ENCODE measurements at regions of chr4 and their contacts with region 1.

Region 1: DNA sequence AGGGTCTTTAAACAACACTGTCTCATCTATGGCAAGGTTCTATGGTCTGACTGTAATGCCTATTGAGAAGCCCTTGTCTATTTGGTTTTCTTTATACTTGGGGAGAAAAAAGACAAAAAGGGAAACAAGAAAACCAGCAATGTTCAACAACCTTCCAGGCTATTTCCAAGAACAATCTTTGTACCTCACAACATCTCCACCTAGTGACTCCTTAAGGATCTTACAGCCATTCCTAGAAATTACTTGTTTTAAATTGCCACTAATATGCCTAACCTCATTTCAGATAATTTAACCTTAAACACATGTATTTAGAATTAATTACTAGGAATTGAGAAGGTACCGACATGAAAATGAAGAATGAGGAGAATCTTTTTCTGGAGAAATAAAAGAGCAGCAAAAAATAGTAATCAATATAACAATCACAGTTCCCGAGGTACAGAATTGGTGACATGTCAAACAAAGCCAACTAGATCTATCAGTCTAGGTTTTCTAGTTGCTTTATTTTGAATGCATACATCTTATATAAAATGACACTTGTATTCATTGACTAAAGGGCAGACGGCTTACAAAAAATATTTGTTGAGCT is 1.6 kb upstream of the RBM46 start:
- DNase-seq: no peak
- H3K4me3 ChIP-seq: no peak overlapping the region
- H3K27ac ChIP-seq: no peak overlapping the region
- H3K4me1 ChIP-seq: no peaks in the 10 kb centered on the region
- H3K27me3 ChIP-seq: no peaks in the 10 kb centered on the region
- CTCF ChIP-seq: peak in 3 of 4 experiments; percentile 20 to 49 (median 42)
- POLR2A ChIP-seq: no peak

Region 2: DNA sequence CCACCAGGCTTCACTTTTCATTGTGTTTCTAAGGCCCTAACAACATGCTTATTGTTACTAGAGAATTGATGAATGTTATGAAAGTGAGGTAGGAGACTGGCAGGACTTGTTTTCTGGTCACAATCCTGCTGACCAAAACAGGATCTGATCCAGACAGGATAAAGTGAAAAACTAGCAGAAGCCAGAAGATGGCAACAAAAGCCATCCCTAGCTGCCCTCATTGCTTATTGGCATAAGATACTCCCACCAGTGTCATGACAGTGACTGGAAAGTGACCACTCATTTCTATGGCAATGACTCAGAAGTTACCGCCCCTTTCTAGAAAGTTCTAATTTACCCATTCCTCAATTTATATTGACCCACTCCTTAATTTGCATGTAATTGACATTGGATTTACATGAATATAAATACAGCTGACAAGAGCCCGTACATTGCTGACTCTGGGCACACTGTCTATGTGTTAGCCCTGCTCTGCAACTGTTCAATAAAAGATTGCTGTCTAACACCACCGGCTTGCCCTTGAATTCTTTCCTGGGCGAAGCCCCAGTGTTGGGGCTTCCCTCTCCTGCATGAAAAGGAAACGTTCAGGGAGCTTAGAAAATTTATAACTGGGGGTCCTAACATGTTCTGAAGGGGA is 137.0 kb before region 1 on chr4:
- intact Hi-C with region 1: loop called (anchors 5 kb)
- DNase-seq: no peak
- H3K4me3 ChIP-seq: no peak overlapping the region
- H3K27ac ChIP-seq: no peak overlapping the region
- H3K4me1 ChIP-seq: no peaks in the 10 kb centered on the region
- H3K27me3 ChIP-seq: no peaks in the 10 kb centered on the region
- CTCF ChIP-seq: no peak
- POLR2A ChIP-seq: no peak